ENCODE measurements at regions of chr3 and their contacts with region 1.

Region 1: GRCh38 chr3:192816351-192816750 is 89.0 kb upstream of the FGF12 start:
- DNase-seq: no peak
- ATAC-seq: peak; percentile 49

Region 2: DNA sequence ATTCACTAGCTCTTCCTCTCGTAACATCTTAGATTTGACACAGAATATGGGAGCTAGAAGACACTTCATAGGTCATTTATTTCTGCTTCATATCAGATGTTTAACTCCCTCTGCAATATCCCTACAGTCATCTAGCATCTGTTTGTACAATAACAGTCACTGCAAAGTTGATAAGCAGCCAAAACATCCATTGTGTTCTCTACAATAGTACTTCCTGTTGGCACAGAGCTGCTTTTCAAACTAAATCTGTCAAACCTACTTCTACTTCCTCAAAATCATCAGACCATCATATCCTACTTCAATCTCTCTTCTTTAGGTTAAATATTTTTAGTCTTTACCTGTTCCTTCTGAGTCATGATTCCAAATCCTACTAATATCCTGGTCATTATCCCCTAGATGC is 322.2 kb before region 1 on chr3:
- intact Hi-C with region 1: no loop called
- DNase-seq: no peak
- ATAC-seq: peak; percentile 34

Region 3: DNA sequence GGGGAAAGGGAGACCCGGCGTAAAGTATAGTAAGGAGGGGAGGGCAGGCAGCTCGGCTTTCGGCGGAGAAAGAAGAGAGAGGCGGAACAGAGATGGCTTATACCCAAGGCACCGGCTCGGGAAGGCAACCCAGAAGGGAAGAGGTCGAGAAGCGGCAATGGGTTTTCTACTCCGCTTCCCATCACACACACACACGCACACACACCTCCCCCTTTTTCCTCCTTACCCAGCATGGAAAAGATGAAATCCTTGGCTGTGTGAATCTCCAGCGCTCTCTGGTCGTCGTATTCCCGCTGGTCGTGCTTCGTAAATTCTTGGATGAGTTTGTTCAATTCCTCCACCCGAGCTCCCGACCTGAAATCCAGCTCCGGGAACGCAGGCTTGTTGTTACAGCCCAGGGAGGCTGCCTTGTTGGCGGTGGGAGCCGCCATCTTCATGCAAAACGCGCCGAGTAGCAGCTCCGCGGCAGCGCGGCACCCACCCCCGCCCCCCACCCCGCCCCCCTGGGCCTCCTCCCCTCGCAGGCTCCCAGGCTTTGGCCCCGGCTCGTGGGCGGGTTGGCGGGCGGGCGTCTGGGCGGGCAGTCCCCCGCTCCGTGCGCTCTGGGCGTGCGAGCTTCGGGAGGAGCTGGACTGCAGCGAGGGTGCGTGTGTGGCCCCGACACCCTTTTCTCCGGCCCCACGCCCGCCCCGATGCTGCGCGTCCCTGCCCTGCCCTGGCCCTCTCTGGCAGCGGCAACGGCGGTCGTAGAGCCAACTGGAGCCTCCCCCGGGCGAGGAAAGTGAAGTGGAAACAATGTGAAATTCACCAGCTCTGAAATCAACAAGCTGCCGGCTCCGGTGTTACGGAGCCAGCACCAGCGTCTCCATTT is 101.3 kb after region 1 on chr3 and contains the start of gene MB21D2:
- intact Hi-C with region 1: loop called (anchors 10 kb)
- DNase-seq: peak; percentile 87
- ATAC-seq: peak; percentile 92
- total RNA-seq, gene MB21D2: 1.7 TPM

Region 4: DNA sequence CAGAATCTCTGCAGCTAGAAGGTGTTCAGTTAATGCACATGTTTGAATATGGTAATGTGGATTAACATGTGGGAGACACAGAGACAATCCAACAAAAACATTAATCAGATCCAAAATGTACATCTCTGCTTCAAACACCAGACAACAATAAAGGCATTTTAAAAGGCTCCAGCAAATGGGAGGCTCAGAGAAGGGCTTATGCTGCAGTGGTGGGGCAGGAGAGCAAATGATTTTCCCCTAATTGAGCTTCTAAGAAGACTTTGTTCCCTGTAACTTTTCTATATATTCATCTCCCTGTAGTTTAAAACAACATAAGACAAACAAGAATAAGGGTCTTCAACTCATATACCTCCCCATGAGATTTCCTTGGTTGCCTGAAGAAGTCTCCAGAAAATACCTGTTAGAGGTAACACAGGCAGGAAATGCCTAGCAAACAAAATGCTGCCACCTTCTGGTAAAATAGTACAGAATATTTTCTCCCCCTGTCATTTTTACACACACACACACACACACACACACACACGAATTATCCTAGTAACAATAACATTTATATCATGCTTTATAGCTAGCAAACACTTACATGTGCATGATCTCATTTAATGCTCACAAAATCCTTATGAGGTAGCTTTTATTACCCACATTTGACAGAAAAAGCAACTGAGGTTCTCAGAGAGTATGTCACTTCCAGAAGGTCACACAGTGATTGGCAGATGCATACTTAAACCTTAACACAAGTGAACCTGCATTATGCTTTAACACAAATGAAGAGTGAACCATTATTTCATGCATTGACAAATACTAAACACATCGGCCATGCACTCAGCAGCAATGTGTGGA is 224.7 kb after region 1 on chr3:
- intact Hi-C with region 1: loop called (anchors 2 kb)
- DNase-seq: no peak
- ATAC-seq: no peak